ENCODE measurements at regions of chr19 and their contacts with region 1.

Region 1: DNA sequence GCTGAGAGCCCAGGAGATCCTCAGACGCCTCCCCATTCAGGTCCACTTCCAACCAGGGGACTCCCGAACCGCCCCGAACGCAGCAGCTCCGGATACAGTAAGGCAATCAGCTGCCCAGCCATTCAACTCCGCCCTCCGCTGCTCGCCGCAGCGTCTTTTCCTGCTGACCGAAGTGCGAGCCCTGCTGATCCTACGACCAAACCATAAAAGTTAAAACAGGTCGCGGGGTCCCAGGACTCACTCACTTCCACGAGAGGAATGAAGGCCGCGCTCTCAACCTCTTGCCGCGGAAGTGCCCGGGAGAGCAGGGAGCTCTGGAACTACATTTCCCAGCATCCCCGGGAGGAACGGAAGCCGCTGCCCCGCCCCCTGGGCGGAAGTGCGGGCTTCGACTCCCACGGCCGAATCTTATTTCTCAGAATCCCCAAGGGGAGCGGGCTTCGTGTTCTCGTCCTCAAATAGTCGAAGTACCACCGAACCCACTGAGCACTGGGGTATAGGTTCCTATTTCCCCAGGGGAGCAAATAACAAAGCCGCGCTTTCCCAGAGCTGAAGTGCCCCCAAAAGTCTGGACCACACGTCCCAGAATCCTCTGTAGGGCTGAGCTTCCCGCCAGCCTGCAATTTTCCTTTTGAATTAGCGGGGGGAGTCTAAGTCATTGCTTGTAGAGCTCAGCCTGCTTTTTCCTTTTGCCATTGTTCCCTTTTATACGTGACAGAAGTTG is at the start of gene ZNF45:
- DNase-seq: peak; percentile 93
- H3K4me3 ChIP-seq: peak within 1 kb of the TSS; percentile 43 to 94 (median 71)
- H3K27ac ChIP-seq: peak within 1 kb of the TSS; percentile 26
- H3K4me1 ChIP-seq: peaks cover 13% of the 10 kb centered on the region
- H3K27me3 ChIP-seq: no peaks in the 10 kb centered on the region
- CTCF ChIP-seq: no peak
- POLR2A ChIP-seq: peak; percentile 53
- total RNA-seq, gene ZNF45: 10.8 and 11.2 TPM in 2 replicates

Region 2: DNA sequence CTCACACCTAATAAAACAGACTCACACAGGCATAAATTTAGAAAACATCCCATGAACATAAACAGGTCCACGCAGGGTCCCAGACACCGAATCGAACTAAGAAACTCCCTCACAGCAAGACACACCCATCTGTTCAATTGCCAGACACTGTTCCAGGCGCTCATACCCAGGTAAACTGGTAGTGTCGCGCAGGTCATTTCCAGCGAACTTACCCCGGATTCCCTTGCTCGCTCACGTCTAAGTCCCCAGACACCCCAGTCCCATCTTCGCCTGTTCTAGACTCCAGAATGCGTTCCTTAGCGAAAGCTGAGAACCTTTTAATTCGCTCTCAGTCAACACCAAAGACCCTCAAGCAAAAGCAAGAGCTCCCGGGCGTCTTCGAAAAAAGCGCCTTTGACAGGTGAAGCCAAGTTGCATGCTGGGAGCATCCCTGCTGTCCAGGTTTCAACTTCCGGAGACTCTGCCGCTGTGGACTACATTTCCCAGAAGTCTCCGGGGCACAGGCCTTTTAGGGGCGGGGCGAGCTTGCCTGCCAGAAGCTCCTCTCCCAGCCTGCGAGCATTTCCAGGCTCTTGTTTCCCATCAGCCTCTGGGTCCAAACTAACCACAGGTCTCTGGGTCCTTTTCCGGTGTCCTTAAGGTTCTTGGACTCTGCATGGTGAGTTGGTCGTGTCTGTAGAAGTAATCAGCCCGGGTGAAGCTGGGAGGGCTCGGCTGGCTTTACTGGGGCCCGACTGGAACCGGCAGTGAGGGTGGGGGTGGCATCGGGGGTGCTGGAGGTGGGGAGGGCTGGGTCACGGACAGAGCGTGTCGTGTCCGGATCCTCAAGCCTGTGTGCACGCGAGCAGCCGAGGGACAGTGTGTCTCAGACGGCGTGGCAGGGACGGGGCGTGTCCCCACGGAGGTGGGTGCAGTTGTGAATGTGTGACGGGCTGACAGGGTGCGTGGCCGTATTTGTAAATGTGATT is 108.1 kb before region 1 on chr19 and contains the start of gene ZNF283:
- CTCF ChIA-PET with region 1: interaction called, 3 read pairs
- POLR2A ChIA-PET with region 1: no interaction called
- dilution Hi-C with region 1: no loop called
- intact Hi-C with region 1: loop called (anchors 5 kb)
- DNase-seq: peak; percentile 79
- H3K4me3 ChIP-seq: peak within 1 kb of the TSS; percentile 68 to 94 (median 71)
- H3K27ac ChIP-seq: no peak within 1 kb of the TSS
- H3K4me1 ChIP-seq: peaks cover 4% of the 10 kb centered on the region
- H3K27me3 ChIP-seq: peaks cover 0 to 3% of the 10 kb centered on the region in 2 experiments
- CTCF ChIP-seq: no peak
- POLR2A ChIP-seq: peak; percentile 72
- total RNA-seq, gene ZNF283: 6.0 and 10.7 TPM in 2 replicates

Region 3: DNA sequence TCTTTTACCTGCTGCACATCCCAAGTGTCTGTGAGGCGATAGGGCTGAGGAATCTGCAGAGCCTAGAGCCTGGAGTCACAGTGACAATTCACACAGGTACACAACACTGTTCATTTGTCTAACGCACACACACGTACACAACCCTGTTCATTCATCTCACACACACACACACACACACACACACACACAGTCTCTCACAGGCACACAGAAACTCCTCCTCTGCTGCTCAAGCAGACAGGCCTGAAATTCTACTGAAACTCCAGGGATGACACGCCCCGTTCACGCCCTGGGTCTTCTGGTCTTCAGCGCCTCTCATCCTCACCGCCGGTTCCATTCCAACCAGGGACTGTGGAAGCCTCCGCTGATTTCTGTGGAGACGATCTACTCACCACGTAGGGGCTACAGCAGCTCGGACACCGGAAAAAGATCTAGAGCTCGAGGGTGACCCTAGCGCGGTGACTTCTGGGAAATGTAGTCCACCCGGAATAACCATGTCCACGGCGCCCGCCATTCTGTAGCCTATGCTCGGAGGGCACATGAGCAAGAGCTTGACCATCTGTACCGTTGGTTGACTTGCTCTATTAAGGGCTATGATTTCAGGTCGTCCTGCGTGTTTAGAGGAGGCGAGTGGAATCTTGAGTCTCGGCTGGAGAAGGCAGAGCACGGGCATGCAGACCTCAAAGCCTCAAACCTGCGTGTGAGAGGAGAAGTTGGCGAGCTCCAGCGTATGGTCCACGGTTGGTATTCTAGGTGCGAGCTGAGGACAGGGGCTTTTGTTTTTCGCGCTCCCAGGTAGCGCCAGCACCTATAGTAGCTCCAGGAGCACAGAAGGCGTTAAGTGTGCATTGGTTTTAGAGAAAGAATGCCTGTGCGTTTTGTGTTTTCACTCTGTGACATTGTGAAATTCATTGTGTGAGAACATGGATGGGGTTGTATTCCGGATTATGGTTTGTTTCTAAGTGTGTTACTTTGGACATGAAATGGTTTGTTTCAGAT is 33.5 kb before region 1 on chr19:
- CTCF ChIA-PET with region 1: interaction called, 5 read pairs
- POLR2A ChIA-PET with region 1: interaction called, 4 read pairs
- dilution Hi-C with region 1: no loop called
- intact Hi-C with region 1: loop called (anchors 2 kb)
- DNase-seq: peak; percentile 88
- H3K4me3 ChIP-seq: peak overlapping the region; percentile 25 to 62 (median 58)
- H3K27ac ChIP-seq: no peak overlapping the region
- H3K4me1 ChIP-seq: peaks cover 8% of the 10 kb centered on the region
- H3K27me3 ChIP-seq: no peaks in the 10 kb centered on the region
- CTCF ChIP-seq: no peak
- POLR2A ChIP-seq: no peak

Region 4: GRCh38 chr19:43983912-43984686 is 49.0 kb after region 1 on chr19 and contains the start of gene ZNF155:
- CTCF ChIA-PET with region 1: no interaction called
- POLR2A ChIA-PET with region 1: no interaction called
- dilution Hi-C with region 1: no loop called
- intact Hi-C with region 1: loop called (anchors 1 kb)
- DNase-seq: peak; percentile 95
- H3K4me3 ChIP-seq: peak within 1 kb of the TSS; percentile 32 to 75 (median 68)
- H3K27ac ChIP-seq: peak within 1 kb of the TSS; percentile 23
- H3K4me1 ChIP-seq: peaks cover 6% of the 10 kb centered on the region
- H3K27me3 ChIP-seq: no peaks in the 10 kb centered on the region
- CTCF ChIP-seq: no peak
- POLR2A ChIP-seq: peak; percentile 39
- total RNA-seq, gene ZNF155: 5.9 and 7.6 TPM in 2 replicates

Region 5: GRCh38 chr19:44026620-44027019 is 91.5 kb after region 1 on chr19:
- CTCF ChIA-PET with region 1: no interaction called
- POLR2A ChIA-PET with region 1: no interaction called
- dilution Hi-C with region 1: no loop called
- intact Hi-C with region 1: no loop called
- DNase-seq: no peak
- H3K4me3 ChIP-seq: no peak overlapping the region
- H3K27ac ChIP-seq: no peak overlapping the region
- H3K4me1 ChIP-seq: no peaks in the 10 kb centered on the region
- H3K27me3 ChIP-seq: no peaks in the 10 kb centered on the region
- CTCF ChIP-seq: no peak
- POLR2A ChIP-seq: no peak

Measured in endothelial cell of umbilical vein (primary cell).